ENCODE measurements at regions of chr19 and their contacts with region 1.

Region 1: GRCh38 chr19:34120846-34121639 is 51.3 kb upstream of the LSM14A start:
- DNase-seq: peak; percentile 66
- ATAC-seq: peak; percentile 68; the same call in 1 of the 2 replicates
- H3K4me3 Mint-ChIP-seq: no peak overlapping the region
- H3K27ac Mint-ChIP-seq: no peak overlapping the region
- H3K4me1 Mint-ChIP-seq: 0 out of 2 replicates have a peak, but pooled peaks cover 3% of the 10 kb centered on the region
- H3K27me3 Mint-ChIP-seq: no peaks in the 10 kb centered on the region; the same call in 1 of the 2 replicates
- CTCF ChIP-seq: peak; percentile 62

Region 2: GRCh38 chr19:34088303-34088702 is 32.7 kb before region 1 on chr19:
- CTCF ChIA-PET with region 1: no interaction called
- POLR2A ChIA-PET with region 1: no interaction called
- DNase-seq: no peak
- ATAC-seq: no peak
- H3K4me3 Mint-ChIP-seq: no peak overlapping the region
- H3K27ac Mint-ChIP-seq: peak overlapping the region; percentile 10; the same call in 1 of the 2 replicates
- H3K4me1 Mint-ChIP-seq: peaks cover 27% of the 10 kb centered on the region
- H3K27me3 Mint-ChIP-seq: no peaks in the 10 kb centered on the region
- CTCF ChIP-seq: no peak

Region 3: DNA sequence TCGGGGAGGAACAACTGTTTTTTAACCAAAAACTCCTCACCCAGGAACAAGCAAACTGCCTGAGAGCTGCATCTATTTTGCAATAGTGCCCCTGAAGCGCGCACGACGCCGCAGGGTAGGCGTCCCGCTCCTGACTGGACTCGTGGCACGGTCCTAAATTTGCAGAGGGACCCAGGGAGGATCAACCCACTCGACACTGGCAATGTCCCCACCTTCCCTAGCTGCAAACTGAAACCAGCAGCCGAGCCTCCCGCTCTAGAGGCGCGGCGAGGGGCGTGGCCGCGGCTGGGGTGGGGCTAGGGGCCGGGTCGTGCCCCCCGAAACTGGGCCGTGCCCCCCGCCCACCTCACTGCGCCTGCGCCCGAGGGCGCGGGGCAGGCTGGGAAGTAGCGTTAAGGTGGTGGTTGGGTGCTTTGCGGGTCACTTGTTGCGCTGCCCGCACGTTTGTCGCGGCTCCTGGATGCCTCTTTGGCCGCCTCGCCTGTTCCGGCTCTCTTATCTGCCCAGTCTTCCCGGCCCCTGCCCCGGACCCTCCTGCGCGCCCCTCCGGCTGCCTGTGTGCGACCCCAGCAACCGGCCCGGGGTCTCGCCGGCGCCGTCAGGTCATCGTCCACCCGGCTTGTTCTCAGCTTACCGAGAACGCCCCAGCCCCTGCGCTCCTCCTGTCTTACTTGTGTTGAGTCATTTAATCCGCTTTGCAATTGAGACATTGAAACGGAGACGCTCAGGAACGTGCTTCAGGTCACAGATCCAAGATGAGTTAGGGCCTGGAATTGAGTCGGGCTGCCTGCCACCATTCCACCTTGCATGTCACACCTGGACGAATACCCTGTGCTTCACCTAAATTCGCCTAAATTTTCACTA is 13.4 kb after region 1 on chr19:
- CTCF ChIA-PET with region 1: interaction called, 11 read pairs
- POLR2A ChIA-PET with region 1: no interaction called
- DNase-seq: peak; percentile 91
- ATAC-seq: peak; percentile 97
- H3K4me3 Mint-ChIP-seq: peak overlapping the region; percentile 87
- H3K27ac Mint-ChIP-seq: peak overlapping the region; percentile 98
- H3K4me1 Mint-ChIP-seq: peaks cover 4% of the 10 kb centered on the region; the same call in 1 of the 2 replicates
- H3K27me3 Mint-ChIP-seq: peaks cover 12% of the 10 kb centered on the region; the same call in 1 of the 2 replicates
- CTCF ChIP-seq: no peak

Region 4: GRCh38 chr19:34173193-34173956 is 52.3 kb after region 1 on chr19:
- CTCF ChIA-PET with region 1: no interaction called
- POLR2A ChIA-PET with region 1: no interaction called
- DNase-seq: peak; percentile 59
- ATAC-seq: peak; percentile 15
- H3K4me3 Mint-ChIP-seq: peak overlapping the region; percentile 97
- H3K27ac Mint-ChIP-seq: peak overlapping the region; percentile 100
- H3K4me1 Mint-ChIP-seq: peaks cover 45% of the 10 kb centered on the region
- H3K27me3 Mint-ChIP-seq: no peaks in the 10 kb centered on the region
- CTCF ChIP-seq: no peak

Measured in WTC11 (cell line).